ENCODE measurements at regions of chr11 and their contacts with region 1.

Region 1: GRCh38 chr11:47407746-47408590 is at the start of gene SLC39A13:
- DNase-seq: peak; percentile 86
- ATAC-seq: peak; percentile 92
- H3K4me3 ChIP-seq: peak within 1 kb of the TSS; percentile 68 to 91 (median 79)
- H3K27ac ChIP-seq: peak within 1 kb of the TSS; percentile 83
- H3K4me1 ChIP-seq: peaks cover 51% of the 10 kb centered on the region
- H3K27me3 ChIP-seq: no peaks in the 10 kb centered on the region; a peak in 1 of 5 replicates
- CTCF ChIP-seq: peak; percentile 90
- EP300 ChIP-seq: peak in 1 of 2 experiments; percentile 52; a peak in 2 of 4 replicates
- POLR2A ChIP-seq: peak; percentile 57 to 90
- RAD21 ChIP-seq: peak; percentile 99
- total RNA-seq, gene SLC39A13: 7.2 and 15.3 TPM in 2 replicates

Region 2: DNA sequence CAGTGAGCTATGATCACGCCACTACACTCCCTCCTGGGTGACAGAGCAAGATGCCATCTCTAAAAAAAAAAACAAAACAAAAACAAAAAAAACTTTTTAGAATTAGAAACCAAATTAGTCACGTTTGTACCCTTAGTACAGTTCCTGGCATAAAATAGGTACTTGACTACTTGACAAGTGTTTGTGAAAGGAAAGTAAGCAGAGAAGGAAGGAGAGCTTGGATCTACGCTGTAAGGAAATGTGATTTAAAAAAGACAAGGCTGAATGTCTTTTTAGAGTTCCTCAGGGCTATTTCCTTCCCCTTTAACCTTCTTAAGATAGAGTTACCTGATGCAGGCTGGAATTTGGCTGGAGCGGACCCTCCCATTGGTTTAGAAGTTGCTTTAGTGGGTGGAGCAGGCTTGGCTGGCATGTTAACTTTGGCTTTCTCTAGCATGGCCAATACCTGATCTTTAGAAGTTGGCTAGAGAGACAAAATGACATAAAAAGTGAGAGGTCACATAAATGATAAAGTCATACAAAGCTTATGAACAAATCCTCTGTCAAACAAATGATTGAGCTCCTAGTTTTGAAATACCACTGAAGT is 638.2 kb before region 1 on chr11:
- CTCF ChIA-PET with region 1: no interaction called
- POLR2A ChIA-PET with region 1: no interaction called
- in situ Hi-C with region 1: no loop called
- intact Hi-C with region 1: no loop called
- DNase-seq: no peak
- ATAC-seq: no peak
- H3K4me3 ChIP-seq: no peak overlapping the region
- H3K27ac ChIP-seq: no peak overlapping the region
- H3K4me1 ChIP-seq: no peaks in the 10 kb centered on the region
- H3K27me3 ChIP-seq: no peaks in the 10 kb centered on the region
- CTCF ChIP-seq: no peak
- EP300 ChIP-seq: no peak
- POLR2A ChIP-seq: no peak
- RAD21 ChIP-seq: no peak

Region 3: DNA sequence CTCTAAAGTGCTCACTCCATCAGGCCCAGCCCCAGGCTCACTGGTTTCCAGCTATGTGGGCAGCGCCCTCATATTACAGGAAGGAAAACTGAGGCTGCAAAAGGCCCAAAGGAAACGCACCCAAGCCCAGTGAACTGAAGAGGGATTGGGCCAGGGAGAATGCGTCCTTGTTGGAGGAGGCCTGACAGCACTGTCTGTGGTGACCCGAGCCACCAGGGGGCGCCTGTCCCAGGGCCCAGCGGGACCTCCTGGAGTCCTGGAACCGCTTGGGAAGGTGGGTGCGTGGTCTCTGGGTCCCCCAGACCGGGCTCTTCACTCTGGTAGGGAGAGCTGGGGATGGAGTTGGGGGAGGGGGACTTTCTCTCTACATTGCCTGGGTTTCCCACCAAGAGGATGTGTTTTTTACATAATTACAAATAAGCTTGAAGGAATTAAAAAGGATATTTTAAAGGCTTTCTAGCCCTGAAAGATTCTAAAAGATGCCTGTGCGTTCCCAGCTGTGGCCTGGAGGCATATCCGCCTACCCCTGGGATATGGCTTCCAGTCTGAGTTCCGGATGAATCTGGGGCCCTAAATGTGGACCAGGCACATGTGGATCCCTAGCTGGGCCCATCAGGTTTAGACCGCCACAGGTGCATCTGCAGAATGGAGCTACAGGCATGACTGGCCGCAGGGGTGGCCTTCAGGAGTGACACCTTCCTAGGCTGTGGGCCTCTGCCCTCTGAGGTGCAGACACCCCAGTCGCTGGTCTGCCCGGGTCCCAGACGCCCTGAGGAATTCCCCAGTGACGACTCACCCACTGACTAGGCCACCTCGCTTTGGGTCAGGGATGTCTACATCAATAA is 33.9 kb before region 1 on chr11:
- CTCF ChIA-PET with region 1: interaction called, 35 read pairs
- POLR2A ChIA-PET with region 1: no interaction called
- in situ Hi-C with region 1: loop called (anchors 5 kb)
- intact Hi-C with region 1: loop called (anchors 1 kb)
- DNase-seq: peak; percentile 60
- ATAC-seq: peak; percentile 93
- H3K4me3 ChIP-seq: no peak overlapping the region
- H3K27ac ChIP-seq: no peak overlapping the region
- H3K4me1 ChIP-seq: peaks cover 12% of the 10 kb centered on the region; the same call in 1 of the 2 replicates
- H3K27me3 ChIP-seq: peaks cover 2% of the 10 kb centered on the region in 2 experiments; a peak in 1 of 5 replicates
- CTCF ChIP-seq: peak; percentile 95
- EP300 ChIP-seq: no peak
- POLR2A ChIP-seq: no peak
- RAD21 ChIP-seq: peak; percentile 85

Region 4: GRCh38 chr11:47426061-47426956 is 18.3 kb after region 1 on chr11 and contains the start of gene PSMC3:
- CTCF ChIA-PET with region 1: no interaction called
- POLR2A ChIA-PET with region 1: interaction called, 33 read pairs
- in situ Hi-C with region 1: no loop called
- intact Hi-C with region 1: loop called (anchors 2 kb)
- DNase-seq: peak; percentile 93
- ATAC-seq: peak; percentile 86
- H3K4me3 ChIP-seq: peak within 1 kb of the TSS; percentile 73 to 99 (median 97)
- H3K27ac ChIP-seq: peak within 1 kb of the TSS; percentile 89
- H3K4me1 ChIP-seq: peaks cover 37% of the 10 kb centered on the region
- H3K27me3 ChIP-seq: no peaks in the 10 kb centered on the region; a peak in 1 of 5 replicates
- CTCF ChIP-seq: no peak
- EP300 ChIP-seq: peak in 1 of 2 experiments; percentile 46; a peak in 2 of 4 replicates
- POLR2A ChIP-seq: peak; percentile 64 to 77
- RAD21 ChIP-seq: no peak
- total RNA-seq, gene PSMC3: 214 and 279 TPM in 2 replicates

Region 5: DNA sequence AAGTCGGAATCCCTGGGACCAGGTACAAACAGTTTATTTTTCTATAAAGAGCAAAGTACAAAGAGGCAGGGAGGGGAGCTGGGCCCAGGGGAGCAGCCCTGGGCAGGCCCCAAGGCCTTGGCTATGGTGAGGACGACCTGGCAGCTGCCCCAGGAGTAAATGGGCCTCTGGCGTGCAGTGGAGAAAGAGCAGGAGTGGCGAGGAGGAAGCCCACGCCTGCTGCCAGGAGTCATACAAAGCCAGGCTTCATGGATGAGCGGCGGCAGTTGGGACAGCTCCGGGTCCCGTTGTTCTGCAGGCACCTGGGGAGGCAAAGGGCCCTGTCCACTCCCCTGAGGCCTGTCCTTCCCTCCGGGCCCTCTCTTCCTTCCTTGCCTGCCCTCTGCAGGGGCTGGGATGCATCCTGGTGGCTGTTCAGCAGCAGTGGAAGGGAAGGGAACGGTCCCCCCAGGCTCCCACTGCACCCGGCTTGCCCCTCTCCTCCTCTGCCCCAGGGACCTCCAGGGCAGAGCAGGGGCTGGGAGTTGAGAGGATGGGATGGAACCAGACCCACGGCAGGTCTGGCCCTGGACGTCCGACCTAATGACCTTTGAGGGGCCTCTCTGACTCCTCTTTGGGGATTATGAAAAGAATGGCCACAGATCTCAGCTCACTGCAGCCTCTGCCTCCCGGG is 29.9 kb after region 1 on chr11:
- CTCF ChIA-PET with region 1: no interaction called
- POLR2A ChIA-PET with region 1: interaction called, 11 read pairs
- in situ Hi-C with region 1: no loop called
- intact Hi-C with region 1: no loop called
- DNase-seq: peak; percentile 68
- ATAC-seq: peak; percentile 84
- H3K4me3 ChIP-seq: peak overlapping the region; percentile 70 to 80 (median 78)
- H3K27ac ChIP-seq: peak overlapping the region; percentile 97
- H3K4me1 ChIP-seq: peaks cover 73% of the 10 kb centered on the region
- H3K27me3 ChIP-seq: no peaks in the 10 kb centered on the region; a peak in 1 of 5 replicates
- CTCF ChIP-seq: peak; percentile 48
- EP300 ChIP-seq: 0 out of 4 replicates have a peak, but pooled peaks of 1 of the 2 experiments have one; percentile 48
- POLR2A ChIP-seq: peak; percentile 57 to 78
- RAD21 ChIP-seq: peak; percentile 55; the same call in 1 of the 2 replicates

Measured in HepG2 (cell line).